Caco-2 (cell line): ENCODE measurements at regions of chr2 and their contacts with region 1.

Region 1: GRCh38 chr2:227106845-227107759 is 56.9 kb downstream of the COL4A4 start:
- DNase-seq: peak; percentile 51 to 70
- H3K4me3 ChIP-seq: no peak overlapping the region
- H3K4me3 Mint-ChIP-seq: no peak overlapping the region
- H3K27ac Mint-ChIP-seq: no peak overlapping the region
- H3K4me1 ChIP-seq: no peaks in the 10 kb centered on the region
- H3K4me1 Mint-ChIP-seq: no peaks in the 10 kb centered on the region
- H3K27me3 ChIP-seq: no peaks in the 10 kb centered on the region
- H3K27me3 Mint-ChIP-seq: no peaks in the 10 kb centered on the region
- CTCF ChIP-seq: peak; percentile 56 to 71

Region 2: GRCh38 chr2:225668606-225669266 is 1438.4 kb before region 1 on chr2:
- CTCF ChIA-PET with region 1: no interaction called
- POLR2A ChIA-PET with region 1: no interaction called
- intact Hi-C with region 1: loop called (anchors 1 kb)
- DNase-seq: peak in 1 of 2 experiments; percentile 33
- H3K4me3 ChIP-seq: no peak overlapping the region
- H3K4me3 Mint-ChIP-seq: no peak overlapping the region
- H3K27ac Mint-ChIP-seq: no peak overlapping the region
- H3K4me1 ChIP-seq: no peaks in the 10 kb centered on the region
- H3K4me1 Mint-ChIP-seq: no peaks in the 10 kb centered on the region
- H3K27me3 ChIP-seq: no peaks in the 10 kb centered on the region
- H3K27me3 Mint-ChIP-seq: peaks cover 6% of the 10 kb centered on the region
- CTCF ChIP-seq: peak; percentile 37 to 64

Region 3: DNA sequence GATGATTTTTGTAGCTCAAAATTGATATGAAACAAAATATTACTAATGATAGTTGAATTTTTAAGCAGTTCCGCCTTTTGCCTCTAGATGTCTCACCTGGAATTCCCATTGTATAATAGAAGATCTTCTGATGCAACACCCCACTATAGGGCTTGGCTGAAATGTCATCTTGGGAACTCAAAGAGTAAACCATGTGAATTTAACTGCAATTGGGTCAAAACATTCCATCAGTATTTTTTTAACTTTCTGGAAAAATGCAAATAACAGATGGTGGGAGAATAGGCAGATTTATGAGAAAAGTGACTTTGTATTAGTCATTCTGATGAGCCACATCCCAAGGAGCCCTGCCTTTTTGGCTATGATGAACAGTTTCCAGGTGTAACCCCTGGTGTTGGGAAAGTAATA is 1217.7 kb before region 1 on chr2:
- CTCF ChIA-PET with region 1: no interaction called
- POLR2A ChIA-PET with region 1: no interaction called
- intact Hi-C with region 1: loop called (anchors 2 kb)
- DNase-seq: peak in 1 of 2 experiments; percentile 40
- H3K4me3 ChIP-seq: no peak overlapping the region
- H3K4me3 Mint-ChIP-seq: no peak overlapping the region
- H3K27ac Mint-ChIP-seq: no peak overlapping the region
- H3K4me1 ChIP-seq: no peaks in the 10 kb centered on the region
- H3K4me1 Mint-ChIP-seq: no peaks in the 10 kb centered on the region
- H3K27me3 ChIP-seq: no peaks in the 10 kb centered on the region
- H3K27me3 Mint-ChIP-seq: no peaks in the 10 kb centered on the region
- CTCF ChIP-seq: peak; percentile 48 to 63

Region 4: DNA sequence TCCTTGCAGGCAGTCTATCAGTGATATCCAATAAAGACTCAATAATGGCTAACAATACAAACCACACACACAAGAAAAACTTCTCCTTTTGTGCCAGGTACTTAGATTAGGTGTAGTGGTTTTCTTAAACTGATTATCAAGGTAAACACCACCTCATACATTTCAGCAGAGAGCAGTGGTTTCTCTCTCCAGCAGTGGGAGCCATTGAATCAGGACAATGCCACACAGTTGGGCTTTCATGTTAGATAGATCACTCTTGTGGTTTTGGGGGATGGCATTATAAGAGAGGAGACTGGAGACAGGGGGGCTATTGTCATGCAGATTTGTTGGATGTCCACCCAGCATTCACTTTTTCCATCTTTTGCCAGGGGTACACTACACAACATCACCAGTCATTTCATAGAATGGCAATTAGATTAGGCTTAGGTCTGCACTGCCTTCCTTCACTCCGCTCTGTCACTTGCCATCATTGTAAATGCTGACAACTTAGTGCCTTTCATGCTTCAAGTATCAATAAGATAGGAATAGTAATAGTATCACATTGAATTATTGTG is 293.9 kb before region 1 on chr2:
- CTCF ChIA-PET with region 1: no interaction called
- POLR2A ChIA-PET with region 1: no interaction called
- intact Hi-C with region 1: loop called (anchors 1 kb)
- DNase-seq: no peak
- H3K4me3 ChIP-seq: no peak overlapping the region
- H3K4me3 Mint-ChIP-seq: no peak overlapping the region
- H3K27ac Mint-ChIP-seq: no peak overlapping the region
- H3K4me1 ChIP-seq: no peaks in the 10 kb centered on the region
- H3K4me1 Mint-ChIP-seq: no peaks in the 10 kb centered on the region
- H3K27me3 ChIP-seq: no peaks in the 10 kb centered on the region
- H3K27me3 Mint-ChIP-seq: no peaks in the 10 kb centered on the region
- CTCF ChIP-seq: peak; percentile 36 to 49

Region 5: GRCh38 chr2:226984750-226985582 is 122.1 kb before region 1 on chr2:
- CTCF ChIA-PET with region 1: no interaction called
- POLR2A ChIA-PET with region 1: no interaction called
- intact Hi-C with region 1: loop called (anchors 1 kb)
- DNase-seq: peak; percentile 29 to 46
- H3K4me3 ChIP-seq: no peak overlapping the region
- H3K4me3 Mint-ChIP-seq: no peak overlapping the region
- H3K27ac Mint-ChIP-seq: no peak overlapping the region
- H3K4me1 ChIP-seq: no peaks in the 10 kb centered on the region
- H3K4me1 Mint-ChIP-seq: peaks cover 7% of the 10 kb centered on the region
- H3K27me3 ChIP-seq: no peaks in the 10 kb centered on the region
- H3K27me3 Mint-ChIP-seq: no peaks in the 10 kb centered on the region
- CTCF ChIP-seq: peak; percentile 46 to 49

Region 6: DNA sequence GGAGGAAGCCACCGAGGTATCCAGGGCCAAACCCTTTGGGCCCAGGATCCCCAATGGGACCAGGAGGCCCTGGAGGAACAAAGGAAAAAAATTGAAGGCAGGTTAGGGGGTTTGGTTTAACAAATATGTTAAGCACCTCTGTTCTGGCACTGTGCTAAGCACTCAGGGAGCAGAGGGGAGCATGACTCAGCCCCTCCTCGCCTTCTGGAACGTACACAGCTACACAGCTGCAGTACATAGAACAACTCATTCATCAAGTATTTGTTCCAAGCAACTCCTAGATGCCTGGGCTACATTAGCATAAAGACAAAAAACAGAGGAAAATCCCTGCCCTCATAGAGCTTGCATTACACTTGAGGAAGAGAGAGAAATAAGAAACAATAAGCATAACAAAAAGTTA is 96.7 kb before region 1 on chr2:
- CTCF ChIA-PET with region 1: no interaction called
- POLR2A ChIA-PET with region 1: no interaction called
- intact Hi-C with region 1: no loop called
- DNase-seq: no peak
- H3K4me3 ChIP-seq: no peak overlapping the region
- H3K4me3 Mint-ChIP-seq: no peak overlapping the region
- H3K27ac Mint-ChIP-seq: no peak overlapping the region
- H3K4me1 ChIP-seq: no peaks in the 10 kb centered on the region
- H3K4me1 Mint-ChIP-seq: no peaks in the 10 kb centered on the region
- H3K27me3 ChIP-seq: no peaks in the 10 kb centered on the region
- H3K27me3 Mint-ChIP-seq: no peaks in the 10 kb centered on the region
- CTCF ChIP-seq: no peak

Region 7: GRCh38 chr2:227033471-227034148 is 73.5 kb before region 1 on chr2:
- CTCF ChIA-PET with region 1: no interaction called
- POLR2A ChIA-PET with region 1: no interaction called
- intact Hi-C with region 1: loop called (anchors 1 kb)
- DNase-seq: peak; percentile 51 to 60
- H3K4me3 ChIP-seq: no peak overlapping the region
- H3K4me3 Mint-ChIP-seq: no peak overlapping the region
- H3K27ac Mint-ChIP-seq: no peak overlapping the region
- H3K4me1 ChIP-seq: peaks cover 4% of the 10 kb centered on the region; the same call in 1 of the 2 replicates
- H3K4me1 Mint-ChIP-seq: no peaks in the 10 kb centered on the region
- H3K27me3 ChIP-seq: no peaks in the 10 kb centered on the region
- H3K27me3 Mint-ChIP-seq: no peaks in the 10 kb centered on the region
- CTCF ChIP-seq: peak; percentile 54 to 72

Region 8: DNA sequence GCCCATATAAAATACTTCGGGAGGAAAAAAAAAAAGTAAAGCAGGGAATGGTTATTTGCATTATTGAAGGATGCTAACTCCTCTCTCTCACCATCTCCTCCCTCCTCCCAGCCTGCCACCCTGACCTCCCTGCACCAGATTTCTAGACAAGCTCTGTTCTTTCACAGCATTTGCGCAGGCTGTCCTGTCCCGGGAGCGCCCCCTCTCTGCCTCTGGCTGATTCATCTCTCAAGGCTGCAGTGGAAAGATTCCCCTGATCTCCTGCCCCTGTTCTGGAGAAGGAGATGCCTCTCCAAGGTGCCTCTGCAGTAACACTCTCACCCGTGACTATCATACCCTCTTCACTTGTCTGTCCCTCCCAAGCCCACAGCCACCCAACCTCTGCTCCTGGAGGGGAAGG is 18.4 kb after region 1 on chr2:
- CTCF ChIA-PET with region 1: no interaction called
- POLR2A ChIA-PET with region 1: no interaction called
- intact Hi-C with region 1: no loop called
- DNase-seq: peak; percentile 25 to 41
- H3K4me3 ChIP-seq: no peak overlapping the region
- H3K4me3 Mint-ChIP-seq: no peak overlapping the region
- H3K27ac Mint-ChIP-seq: peak overlapping the region; percentile 62
- H3K4me1 ChIP-seq: peaks cover 15% of the 10 kb centered on the region
- H3K4me1 Mint-ChIP-seq: peaks cover 29% of the 10 kb centered on the region
- H3K27me3 ChIP-seq: no peaks in the 10 kb centered on the region
- H3K27me3 Mint-ChIP-seq: no peaks in the 10 kb centered on the region
- CTCF ChIP-seq: peak in 1 of 2 experiments; percentile 8

Region 9: GRCh38 chr2:227147023-227147422 is 39.9 kb after region 1 on chr2:
- CTCF ChIA-PET with region 1: no interaction called
- POLR2A ChIA-PET with region 1: no interaction called
- intact Hi-C with region 1: no loop called
- DNase-seq: no peak
- H3K4me3 ChIP-seq: no peak overlapping the region
- H3K4me3 Mint-ChIP-seq: no peak overlapping the region
- H3K27ac Mint-ChIP-seq: no peak overlapping the region
- H3K4me1 ChIP-seq: no peaks in the 10 kb centered on the region
- H3K4me1 Mint-ChIP-seq: no peaks in the 10 kb centered on the region
- H3K27me3 ChIP-seq: no peaks in the 10 kb centered on the region
- H3K27me3 Mint-ChIP-seq: no peaks in the 10 kb centered on the region
- CTCF ChIP-seq: no peak

Region 10: GRCh38 chr2:227460070-227460485 is 353.0 kb after region 1 on chr2:
- CTCF ChIA-PET with region 1: no interaction called
- POLR2A ChIA-PET with region 1: no interaction called
- intact Hi-C with region 1: no loop called
- DNase-seq: no peak
- H3K4me3 ChIP-seq: no peak overlapping the region
- H3K4me3 Mint-ChIP-seq: no peak overlapping the region
- H3K27ac Mint-ChIP-seq: no peak overlapping the region
- H3K4me1 ChIP-seq: peaks cover 16% of the 10 kb centered on the region
- H3K4me1 Mint-ChIP-seq: peaks cover 14% of the 10 kb centered on the region
- H3K27me3 ChIP-seq: no peaks in the 10 kb centered on the region
- H3K27me3 Mint-ChIP-seq: no peaks in the 10 kb centered on the region
- CTCF ChIP-seq: no peak